ENCODE measurements at regions of chr17 and their contacts with region 1.

Region 1: GRCh38 chr17:80892019-80892855 is 99.4 kb upstream of the CHMP6 start:
- DNase-seq: peak; percentile 76
- ATAC-seq: peak; percentile 88
- H3K4me3 Mint-ChIP-seq: peak overlapping the region; percentile 72
- H3K27ac Mint-ChIP-seq: peak overlapping the region; percentile 85
- H3K4me1 Mint-ChIP-seq: peaks cover 59% of the 10 kb centered on the region
- H3K27me3 Mint-ChIP-seq: no peaks in the 10 kb centered on the region

Region 2: DNA sequence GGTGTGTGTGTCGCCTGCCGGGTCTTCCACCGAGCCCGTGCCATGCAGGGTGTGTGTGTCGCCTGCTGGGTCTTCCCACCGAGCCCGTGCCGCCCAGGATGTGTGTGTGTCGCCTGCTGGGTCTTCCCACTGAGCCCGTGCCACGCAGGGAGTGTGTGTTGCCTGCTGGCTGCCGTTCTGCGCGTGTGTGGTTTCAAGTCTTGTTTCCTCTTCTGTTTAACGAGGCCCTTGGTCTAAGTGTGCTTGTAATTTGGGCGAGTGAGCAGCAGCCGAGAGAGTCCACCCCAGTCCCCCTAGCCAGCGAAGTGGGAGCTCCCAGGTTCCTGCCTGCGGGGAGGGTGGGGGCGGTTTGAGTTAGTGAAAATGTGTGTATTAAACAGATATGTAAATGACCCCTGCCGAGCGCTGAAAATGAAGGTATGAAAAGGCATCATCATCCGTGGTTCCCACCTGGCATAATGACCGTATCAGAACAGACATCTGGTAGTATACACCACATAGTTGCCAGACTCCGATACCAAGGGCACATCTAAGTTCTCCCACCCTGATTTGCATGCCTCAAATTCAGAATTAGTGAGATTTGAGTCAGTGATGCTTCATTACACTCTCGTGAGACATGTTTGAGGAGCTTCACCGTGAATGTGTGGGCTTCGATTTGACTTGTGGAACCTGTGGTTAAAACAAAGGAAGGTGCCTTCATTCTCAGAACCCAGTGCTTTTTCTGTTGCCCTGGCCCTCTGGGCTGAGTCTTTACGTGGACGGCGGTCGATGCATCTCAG is 15.1 kb before region 1 on chr17:
- POLR2A ChIA-PET with region 1: interaction called, 19 read pairs
- DNase-seq: peak; percentile 61
- ATAC-seq: peak; percentile 86
- H3K4me3 Mint-ChIP-seq: peak overlapping the region; percentile 82
- H3K27ac Mint-ChIP-seq: peak overlapping the region; percentile 99
- H3K4me1 Mint-ChIP-seq: peaks cover 44% of the 10 kb centered on the region
- H3K27me3 Mint-ChIP-seq: no peaks in the 10 kb centered on the region

Region 3: DNA sequence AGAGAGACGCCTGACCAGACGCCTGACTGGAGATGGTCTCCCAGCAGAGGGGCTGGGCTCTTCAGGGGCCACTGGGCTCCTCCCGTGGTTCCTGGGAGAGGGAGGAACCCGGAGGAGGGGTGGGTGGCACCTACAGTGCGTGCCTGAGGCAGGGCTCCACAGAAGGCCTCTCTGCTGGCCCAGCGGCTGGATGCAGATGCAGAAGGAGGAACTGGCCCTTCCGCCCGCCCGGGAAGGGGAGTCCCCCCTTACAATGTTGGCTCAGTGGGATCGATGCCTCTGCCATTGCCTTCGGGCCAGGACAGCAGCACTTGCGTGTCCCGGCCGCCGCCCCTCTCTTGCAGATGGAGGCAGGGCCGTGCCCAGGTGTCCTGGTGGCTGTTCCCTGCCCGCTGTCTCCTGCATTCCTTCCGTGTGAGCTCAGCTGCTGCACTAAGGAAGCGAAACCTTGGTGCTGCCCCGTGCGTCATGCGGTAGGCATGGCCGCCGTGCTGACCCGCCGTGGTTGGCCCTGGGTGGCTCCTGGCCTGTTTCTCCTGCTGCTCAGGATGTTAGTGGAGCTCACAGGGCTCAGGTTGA is 157.8 kb after region 1 on chr17:
- POLR2A ChIA-PET with region 1: no interaction called
- DNase-seq: no peak
- ATAC-seq: no peak
- H3K4me3 Mint-ChIP-seq: no peak overlapping the region
- H3K27ac Mint-ChIP-seq: no peak overlapping the region
- H3K4me1 Mint-ChIP-seq: peaks cover 6% of the 10 kb centered on the region
- H3K27me3 Mint-ChIP-seq: no peaks in the 10 kb centered on the region